ENCODE measurements at regions of chr7 and their contacts with region 1.

Region 1: DNA sequence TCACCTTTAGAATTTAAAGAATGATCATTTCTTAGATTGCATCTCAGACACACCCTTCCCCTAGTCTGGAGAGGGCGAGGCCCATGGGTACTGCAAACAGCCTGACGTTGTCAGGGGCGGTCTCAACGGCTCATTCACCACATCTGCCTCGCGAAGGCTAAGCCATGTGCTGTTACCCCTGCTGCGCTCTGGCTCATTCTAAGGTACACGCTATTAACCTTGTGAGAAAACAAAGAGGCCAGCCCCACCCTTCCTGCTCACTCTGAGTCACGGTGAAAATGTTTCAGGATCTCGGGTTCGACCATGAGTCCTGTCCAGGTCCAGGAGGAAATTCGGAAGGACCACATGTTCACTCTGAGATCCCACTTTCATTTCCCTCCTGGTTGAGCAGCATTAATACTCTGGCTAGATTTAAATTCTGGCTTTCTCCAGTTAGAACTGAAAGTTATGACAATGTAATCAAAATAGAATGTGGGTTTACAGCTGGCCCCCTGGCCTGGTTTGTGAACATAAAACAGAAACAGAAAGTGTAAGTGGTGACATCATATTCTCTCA is 55.2 kb downstream of the EGFR start:
- DNase-seq: peak; percentile 32
- H3K4me3 ChIP-seq: no peak overlapping the region
- H3K27ac ChIP-seq: peak overlapping the region; percentile 11 to 23
- H3K4me1 ChIP-seq: peaks cover 8% of the 10 kb centered on the region
- H3K27me3 ChIP-seq: no peaks in the 10 kb centered on the region
- CTCF ChIP-seq: no peak
- POLR2A ChIP-seq: no peak

Region 2: DNA sequence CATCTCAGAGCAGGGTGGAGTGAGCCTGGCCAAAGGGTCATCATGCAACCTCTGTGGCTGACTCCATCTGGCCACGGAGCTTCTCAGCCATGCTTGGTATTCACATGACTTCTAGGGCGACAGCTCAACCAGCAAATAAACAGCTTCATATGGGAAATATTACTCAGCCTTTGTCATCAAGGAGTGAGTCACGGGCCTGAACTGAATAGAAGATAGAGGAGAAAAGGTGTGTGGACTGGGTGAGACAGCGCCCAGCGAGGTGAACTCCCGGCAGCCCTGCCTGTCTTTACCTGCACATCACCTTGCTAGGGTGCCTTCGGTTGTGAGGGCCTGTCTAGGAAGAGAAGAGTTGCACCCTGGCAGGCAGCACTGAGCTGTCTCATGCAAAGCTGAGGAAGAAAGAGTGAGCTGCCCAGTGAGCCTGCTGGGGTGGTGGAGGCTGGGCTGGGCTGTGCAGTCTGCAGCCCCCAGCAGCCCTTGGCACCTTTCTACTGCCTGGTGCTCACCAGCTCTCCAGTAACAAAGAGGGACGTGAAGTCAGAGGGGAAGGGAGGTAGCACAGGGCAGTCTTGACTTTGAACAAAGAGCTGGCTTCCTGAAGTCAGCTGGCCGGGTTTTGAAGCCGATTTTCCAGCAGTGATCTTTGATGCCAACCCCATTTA is 59.0 kb after region 1 on chr7:
- intact Hi-C with region 1: loop called (anchors 5 kb)
- DNase-seq: no peak
- H3K4me3 ChIP-seq: no peak overlapping the region
- H3K27ac ChIP-seq: no peak overlapping the region
- H3K4me1 ChIP-seq: peaks cover 13% of the 10 kb centered on the region
- H3K27me3 ChIP-seq: no peaks in the 10 kb centered on the region
- CTCF ChIP-seq: no peak
- POLR2A ChIP-seq: no peak